ENCODE measurements at regions of chr9 and their contacts with region 1.

Region 1: GRCh38 chr9:613771-614347 is 227.6 kb upstream of the DMRT1 start:
- DNase-seq: peak; percentile 76 to 82 (median 79)
- ATAC-seq: peak; percentile 88 to 95 (median 92)
- H3K4me3 ChIP-seq: no peak overlapping the region
- H3K27ac ChIP-seq: peak overlapping the region; percentile 3 to 79 (median 44)
- H3K4me1 ChIP-seq: peaks cover 0 to 68% (median 30%) of the 10 kb centered on the region in 12 donors
- H3K27me3 ChIP-seq: no peaks in the 10 kb centered on the region
- CTCF ChIP-seq: peak; percentile 48 to 97 (median 86)
- POLR2A ChIP-seq: no peak

Region 2: DNA sequence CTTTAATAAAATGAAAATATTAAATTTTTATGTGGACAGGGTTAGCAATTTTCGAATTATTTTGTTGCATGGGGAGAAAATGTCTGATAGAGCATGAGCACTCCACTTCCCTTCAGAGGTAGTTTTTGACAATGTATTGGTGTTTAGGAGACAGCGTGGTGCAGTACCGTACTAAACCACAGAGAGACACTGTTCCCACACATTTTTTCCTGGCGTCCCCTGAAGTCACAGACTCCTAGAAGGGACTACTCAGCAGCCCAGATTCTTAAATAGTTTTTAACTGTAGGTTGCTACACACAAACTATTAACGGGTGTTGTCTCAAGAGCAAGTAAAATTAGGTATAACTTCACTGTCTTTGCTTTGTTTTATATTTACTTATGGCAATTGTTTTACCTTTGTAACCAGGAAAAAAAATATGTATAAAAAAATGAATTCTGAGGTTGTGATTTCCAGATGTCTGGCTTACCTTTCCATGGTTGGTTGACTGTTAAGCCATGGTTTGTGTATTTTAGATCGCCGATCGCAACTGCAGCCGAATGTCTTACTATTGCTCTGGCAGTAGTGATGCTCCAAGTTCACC is 228.0 kb before region 1 on chr9:
- intact Hi-C with region 1: loop called in 5 of 10 experiments (anchors 5 kb)
- DNase-seq: peak in 2 of 5 donors; percentile 19 to 34
- ATAC-seq: peak; percentile 79 to 87 (median 84)
- H3K4me3 ChIP-seq: no peak overlapping the region
- H3K27ac ChIP-seq: no peak overlapping the region
- H3K4me1 ChIP-seq: no peaks in the 10 kb centered on the region
- H3K27me3 ChIP-seq: no peaks in the 10 kb centered on the region
- CTCF ChIP-seq: peak; percentile 67 to 89 (median 84)
- POLR2A ChIP-seq: no peak

Region 3: GRCh38 chr9:406886-407654 is 206.8 kb before region 1 on chr9:
- intact Hi-C with region 1: loop called in 3 of 10 experiments (anchors 5 to 10 kb)
- DNase-seq: no peak
- ATAC-seq: peak; percentile 84 to 89 (median 88)
- H3K4me3 ChIP-seq: no peak overlapping the region
- H3K27ac ChIP-seq: no peak overlapping the region
- H3K4me1 ChIP-seq: no peaks in the 10 kb centered on the region
- H3K27me3 ChIP-seq: no peaks in the 10 kb centered on the region
- CTCF ChIP-seq: peak in 11 of 12 donors; percentile 18 to 59 (median 50)
- POLR2A ChIP-seq: no peak

Region 4: GRCh38 chr9:650362-650761 is 36.5 kb after region 1 on chr9:
- intact Hi-C with region 1: no loop called
- DNase-seq: no peak
- ATAC-seq: peak in 1 of 4 donors; percentile 38
- H3K4me3 ChIP-seq: peak overlapping the region in 1 of 12 donors; percentile 20
- H3K27ac ChIP-seq: peak overlapping the region in 11 of 12 donors; percentile 11 to 60 (median 54)
- H3K4me1 ChIP-seq: peaks cover 8 to 78% (median 48%) of the 10 kb centered on the region in 12 donors
- H3K27me3 ChIP-seq: no peaks in the 10 kb centered on the region
- CTCF ChIP-seq: no peak
- POLR2A ChIP-seq: no peak

Region 5: GRCh38 chr9:757246-757881 is 143.5 kb after region 1 on chr9:
- intact Hi-C with region 1: loop called in 8 of 10 experiments (anchors 2 to 5 kb)
- DNase-seq: peak in 2 of 5 donors; percentile 41 to 46
- ATAC-seq: peak; percentile 59 to 78 (median 70)
- H3K4me3 ChIP-seq: no peak overlapping the region
- H3K27ac ChIP-seq: no peak overlapping the region
- H3K4me1 ChIP-seq: peaks cover 0 to 20% (median 4%) of the 10 kb centered on the region in 12 donors
- H3K27me3 ChIP-seq: no peaks in the 10 kb centered on the region
- CTCF ChIP-seq: peak; percentile 39 to 68 (median 52)
- POLR2A ChIP-seq: no peak

Region 6: DNA sequence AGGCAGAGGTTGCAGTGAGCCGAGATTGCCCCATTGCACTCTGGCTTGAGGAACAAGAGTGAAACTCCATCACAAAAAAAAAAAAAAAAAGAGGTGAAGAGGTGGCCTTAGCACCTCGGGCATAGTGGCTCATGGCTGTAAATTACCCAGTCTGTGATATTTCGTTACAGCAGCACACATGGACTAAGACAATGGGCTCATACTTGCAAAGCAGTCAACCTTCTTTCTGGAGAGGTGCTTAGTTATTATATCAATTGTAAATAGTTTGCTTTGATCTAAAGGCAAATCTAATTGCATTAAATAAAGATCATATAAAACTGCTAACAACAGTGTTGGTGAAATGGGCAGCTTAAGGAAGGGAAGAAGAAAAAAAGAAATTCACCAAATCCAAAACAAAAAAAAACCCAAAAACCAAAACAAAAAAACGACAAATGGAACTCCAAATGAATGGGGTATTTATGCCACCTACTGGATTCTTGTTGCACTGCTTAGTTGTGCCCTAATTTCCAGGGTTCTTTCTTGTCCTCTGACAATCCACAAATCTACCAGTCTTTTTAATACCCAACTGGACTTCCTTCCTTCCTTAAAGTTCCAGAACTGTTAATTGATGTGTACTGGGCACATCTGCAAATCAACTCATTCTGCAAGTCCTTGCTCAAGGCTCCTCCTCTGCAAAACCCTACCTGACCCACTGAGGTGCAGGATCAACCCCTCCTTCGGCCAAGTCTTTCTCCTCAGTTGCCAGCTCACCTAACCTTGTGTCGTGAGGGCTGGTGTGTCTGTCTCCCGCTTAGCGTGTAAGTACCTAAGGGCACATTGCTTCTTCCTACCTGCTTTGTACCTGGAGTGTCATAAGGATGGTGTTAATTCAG is 192.7 kb after region 1 on chr9:
- intact Hi-C with region 1: loop called in 4 of 10 experiments (anchors 2 to 5 kb)
- DNase-seq: no peak
- ATAC-seq: peak in 1 of 4 donors; percentile 47
- H3K4me3 ChIP-seq: no peak overlapping the region
- H3K27ac ChIP-seq: no peak overlapping the region
- H3K4me1 ChIP-seq: no peaks in the 10 kb centered on the region
- H3K27me3 ChIP-seq: peaks cover 0 to 6% (median 0%) of the 10 kb centered on the region in 9 donors
- CTCF ChIP-seq: peak; percentile 53 to 78 (median 64)
- POLR2A ChIP-seq: no peak